Activated CD4-positive, alpha-beta memory T cell treated with anti-CD3 and anti-CD28 coated beads, Interleukin-2, amount 10 ng/mL, durations not matched to agents 7 days and 5 days (primary cell): ENCODE measurements at regions of chr2 and their contacts with region 1.

Region 1: DNA sequence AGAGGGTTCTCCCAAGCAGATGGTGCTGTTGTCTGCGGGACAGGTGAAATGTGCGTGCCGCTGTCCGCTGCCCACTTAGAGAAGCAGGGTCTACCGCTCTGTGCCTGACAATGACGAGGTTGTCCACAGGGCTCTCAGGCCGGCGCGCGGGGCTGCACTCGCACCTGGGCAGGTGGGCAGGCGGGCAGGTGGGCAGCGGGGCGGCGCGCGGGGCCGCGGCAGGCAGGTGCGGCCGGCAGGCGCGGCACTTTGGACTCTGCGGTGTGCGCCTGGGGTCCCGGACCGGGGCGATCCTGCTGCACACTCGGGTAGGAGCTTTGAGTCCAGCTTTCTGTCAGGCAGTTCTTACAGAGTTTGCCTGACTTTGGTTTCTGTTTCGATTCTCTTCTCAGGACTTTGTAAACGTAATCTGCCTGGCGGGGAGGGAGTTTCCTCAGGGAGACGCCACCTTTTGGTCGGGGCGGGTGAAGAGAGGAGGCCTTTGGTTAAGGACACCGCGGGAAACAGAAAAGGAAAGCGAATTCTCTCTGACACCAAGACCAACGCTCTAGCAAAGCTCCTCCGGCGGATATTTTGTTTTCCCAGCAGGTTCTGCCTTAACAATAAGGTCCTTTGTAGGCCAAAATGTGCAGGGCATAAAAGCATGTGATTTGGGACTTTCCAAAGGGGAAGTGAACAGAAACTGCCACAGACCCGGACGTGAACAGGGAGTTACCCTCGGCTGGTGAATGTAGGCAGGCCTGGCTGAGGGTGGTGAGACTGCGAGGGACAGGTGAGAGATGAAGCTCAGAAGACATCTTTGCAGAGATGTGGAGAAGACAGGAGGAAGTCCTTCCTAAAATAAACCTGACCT is at the start of gene IFIH1:
- DNase-seq: peak; percentile 82
- H3K4me3 Mint-ChIP-seq: peak within 1 kb of the TSS; percentile 89
- H3K27ac Mint-ChIP-seq: peak within 1 kb of the TSS; percentile 94
- H3K4me1 Mint-ChIP-seq: peaks cover 57% of the 10 kb centered on the region
- H3K27me3 Mint-ChIP-seq: no peaks in the 10 kb centered on the region
- total RNA-seq, gene IFIH1: 63.9 to 66.9 TPM

Region 2: DNA sequence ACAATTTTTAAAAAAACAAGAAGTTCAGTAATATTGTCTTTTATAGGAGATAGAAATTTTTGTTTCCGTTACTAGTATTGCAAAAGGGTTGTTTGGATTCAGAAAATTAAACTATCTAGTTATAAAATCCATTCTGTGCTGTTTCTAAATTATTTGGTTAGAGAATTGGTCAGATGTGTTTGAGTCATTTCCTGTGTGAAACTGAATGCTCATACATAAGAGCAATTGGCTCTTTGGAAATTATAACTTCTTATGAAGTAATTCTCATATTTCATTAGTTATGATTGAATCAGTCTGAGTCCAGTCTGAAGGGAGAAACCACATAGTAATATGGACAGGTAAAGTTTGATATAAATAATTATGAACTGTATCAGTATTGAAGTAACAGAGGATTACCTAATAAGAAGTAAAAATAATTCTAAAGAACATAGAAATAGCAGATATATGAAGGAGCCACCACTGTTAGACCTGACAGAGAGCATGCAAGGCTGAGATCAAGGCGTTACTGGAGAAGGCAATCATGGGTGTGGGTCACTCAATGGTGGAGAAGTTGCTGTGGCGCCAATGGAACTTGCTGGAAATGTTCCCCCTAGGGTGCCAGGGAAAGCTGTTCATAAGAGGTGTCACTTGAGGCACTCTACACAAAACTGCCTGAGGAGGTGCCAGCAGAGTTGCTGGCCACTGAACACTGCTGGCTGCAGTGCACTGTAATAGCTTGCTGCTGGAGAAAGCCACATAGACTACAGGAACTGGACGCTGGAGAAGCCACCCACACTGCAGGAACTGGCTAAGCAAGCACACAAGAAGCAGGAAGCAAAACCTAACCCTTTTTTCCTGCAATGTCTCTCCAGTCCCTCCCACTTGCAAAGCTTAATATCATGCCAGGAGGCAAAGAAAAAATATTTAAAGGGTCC is 57.3 kb before region 1 on chr2:
- CTCF ChIA-PET with region 1: no interaction called
- POLR2A ChIA-PET with region 1: no interaction called
- DNase-seq: peak; percentile 17
- H3K4me3 Mint-ChIP-seq: no peak overlapping the region
- H3K27ac Mint-ChIP-seq: peak overlapping the region; percentile 26
- H3K4me1 Mint-ChIP-seq: peaks cover 12% of the 10 kb centered on the region
- H3K27me3 Mint-ChIP-seq: peaks cover 11% of the 10 kb centered on the region

Region 3: DNA sequence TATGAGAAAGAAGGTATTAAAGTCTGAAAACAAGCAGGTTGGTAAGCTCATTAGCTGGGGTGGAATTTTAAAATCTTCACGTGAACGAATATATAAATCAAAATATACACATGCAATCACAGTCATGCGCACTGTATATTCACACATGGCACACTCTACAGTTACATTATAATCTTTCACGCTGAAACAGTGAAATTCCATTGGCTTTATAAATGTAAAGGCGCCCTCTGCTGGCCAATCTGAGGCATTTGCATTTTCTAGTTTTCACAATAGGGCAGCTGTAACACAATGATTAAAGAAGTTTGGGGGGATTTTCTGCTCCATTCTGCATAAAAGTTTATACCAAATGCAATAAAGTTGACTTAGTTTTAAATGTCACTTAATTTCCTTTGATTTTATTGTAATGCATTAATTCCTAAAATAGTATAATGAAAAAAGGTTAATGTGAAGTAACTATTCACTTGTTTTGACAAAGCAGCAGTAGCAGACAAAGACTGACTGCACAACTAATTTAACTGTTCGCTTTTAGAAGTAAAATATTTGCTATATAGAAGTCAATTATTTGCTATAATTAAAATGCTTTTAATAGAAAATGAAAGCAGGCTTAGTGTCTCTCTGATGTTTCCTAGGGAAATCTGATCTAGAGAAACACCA is 17.3 kb before region 1 on chr2:
- CTCF ChIA-PET with region 1: interaction called, 41 read pairs
- POLR2A ChIA-PET with region 1: interaction called, 5 read pairs
- DNase-seq: peak; percentile 62
- H3K4me3 Mint-ChIP-seq: no peak overlapping the region
- H3K27ac Mint-ChIP-seq: no peak overlapping the region
- H3K4me1 Mint-ChIP-seq: peaks cover 2% of the 10 kb centered on the region
- H3K27me3 Mint-ChIP-seq: no peaks in the 10 kb centered on the region

Region 4: GRCh38 chr2:162333968-162334367 is 15.4 kb after region 1 on chr2:
- CTCF ChIA-PET with region 1: interaction called, 21 read pairs
- POLR2A ChIA-PET with region 1: interaction called, 8 read pairs
- DNase-seq: no peak
- H3K4me3 Mint-ChIP-seq: no peak overlapping the region
- H3K27ac Mint-ChIP-seq: no peak overlapping the region
- H3K4me1 Mint-ChIP-seq: peaks cover under 1% of the 10 kb centered on the region
- H3K27me3 Mint-ChIP-seq: no peaks in the 10 kb centered on the region

Region 5: GRCh38 chr2:162343824-162344616 is 25.5 kb after region 1 on chr2 and contains the start of gene GCA:
- CTCF ChIA-PET with region 1: interaction called, 9 read pairs
- POLR2A ChIA-PET with region 1: interaction called, 18 read pairs
- DNase-seq: peak; percentile 98
- H3K4me3 Mint-ChIP-seq: peak within 1 kb of the TSS; percentile 86
- H3K27ac Mint-ChIP-seq: peak within 1 kb of the TSS; percentile 55
- H3K4me1 Mint-ChIP-seq: peaks cover 14% of the 10 kb centered on the region
- H3K27me3 Mint-ChIP-seq: peaks cover 3% of the 10 kb centered on the region
- total RNA-seq, gene GCA: 15.4 to 17.0 TPM

Region 6: GRCh38 chr2:162422891-162423290 is 104.3 kb after region 1 on chr2:
- CTCF ChIA-PET with region 1: no interaction called
- POLR2A ChIA-PET with region 1: no interaction called
- DNase-seq: no peak
- H3K4me3 Mint-ChIP-seq: no peak overlapping the region
- H3K27ac Mint-ChIP-seq: no peak overlapping the region
- H3K4me1 Mint-ChIP-seq: no peaks in the 10 kb centered on the region
- H3K27me3 Mint-ChIP-seq: no peaks in the 10 kb centered on the region